ENCODE measurements at regions of chr11 and their contacts with region 1.

Region 1: GRCh38 chr11:10998674-10999073 is 140.8 kb upstream of the ZBED5 start:
- DNase-seq: no peak
- ATAC-seq: no peak
- H3K4me3 ChIP-seq: no peak overlapping the region
- H3K27ac ChIP-seq: no peak overlapping the region
- H3K4me1 ChIP-seq: no peaks in the 10 kb centered on the region
- H3K27me3 ChIP-seq: peaks cover 0 to 24% (median 3%) of the 10 kb centered on the region in 9 donors
- CTCF ChIP-seq: no peak
- POLR2A ChIP-seq: no peak

Region 2: DNA sequence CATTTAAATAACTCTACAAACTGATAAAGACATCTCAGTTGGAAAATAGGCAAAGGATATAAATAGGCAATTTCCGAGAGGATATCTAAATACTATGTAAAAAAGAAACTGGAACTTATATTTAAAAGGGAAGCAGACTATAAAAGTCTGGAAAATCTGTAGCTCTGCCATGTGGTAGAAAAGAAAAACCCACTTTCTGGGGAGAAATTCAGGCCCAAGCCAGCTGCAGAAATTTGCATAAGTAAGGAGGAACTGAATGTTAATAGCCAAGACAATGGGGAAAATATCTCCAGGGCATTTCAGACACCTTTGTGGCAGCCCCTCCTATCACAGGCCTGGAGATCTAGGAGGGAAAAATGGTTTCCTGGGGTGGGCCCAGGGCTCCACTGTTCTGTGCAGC is 43.1 kb before region 1 on chr11:
- intact Hi-C with region 1: loop called in 1 of 10 experiments (anchors 5 kb)
- DNase-seq: no peak
- ATAC-seq: no peak
- H3K4me3 ChIP-seq: no peak overlapping the region
- H3K27ac ChIP-seq: no peak overlapping the region
- H3K4me1 ChIP-seq: no peaks in the 10 kb centered on the region
- H3K27me3 ChIP-seq: peaks cover 0 to 4% (median 0%) of the 10 kb centered on the region in 9 donors
- CTCF ChIP-seq: no peak
- POLR2A ChIP-seq: no peak